ENCODE measurements at regions of chr4 and their contacts with region 1.

Region 1: GRCh38 chr4:157045507-157046127 is 30.3 kb upstream of the GLRB start:
- H3K4me3 Mint-ChIP-seq: no peak overlapping the region
- H3K27ac Mint-ChIP-seq: no peak overlapping the region
- H3K4me1 Mint-ChIP-seq: no peaks in the 10 kb centered on the region
- H3K27me3 Mint-ChIP-seq: no peaks in the 10 kb centered on the region

Region 2: DNA sequence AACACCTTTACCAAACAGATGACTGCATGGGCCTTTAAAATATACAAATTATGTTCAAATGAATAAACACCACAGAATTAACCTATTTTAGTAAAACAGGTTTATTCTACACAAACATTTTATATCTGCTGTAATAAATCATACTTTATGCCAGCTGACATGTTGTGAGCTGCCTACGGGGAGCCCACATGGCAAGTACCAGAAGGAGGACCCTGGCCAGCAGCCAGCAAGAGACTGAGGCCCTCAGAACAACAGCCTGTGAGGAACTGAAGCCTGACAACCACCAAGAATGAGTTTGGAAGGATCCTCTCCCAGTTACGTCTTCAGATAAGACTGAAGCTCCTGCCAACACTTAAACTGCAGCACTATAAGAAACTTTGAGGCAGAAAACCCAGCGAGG is 451.0 kb before region 1 on chr4:
- intact Hi-C with region 1: loop called (anchors 5 kb)
- H3K4me3 Mint-ChIP-seq: no peak overlapping the region
- H3K27ac Mint-ChIP-seq: no peak overlapping the region
- H3K4me1 Mint-ChIP-seq: peaks cover 16% of the 10 kb centered on the region
- H3K27me3 Mint-ChIP-seq: peaks cover 2% of the 10 kb centered on the region

Measured in dendritic cell treated with granulocyte-macrophage colony-stimulating factor and Interleukin-4, amounts not matched to agents 40 ng/mL and 50 ng/mL, for 4 days (primary cell).